ENCODE measurements at regions of chr9 and their contacts with region 1.

Region 1: GRCh38 chr9:6412487-6413364 is at the start of gene UHRF2:
- DNase-seq: peak; percentile 100
- ATAC-seq: peak; percentile 92
- H3K4me3 Mint-ChIP-seq: peak within 1 kb of the TSS; percentile 83
- H3K27ac Mint-ChIP-seq: peak within 1 kb of the TSS; percentile 95
- H3K4me1 Mint-ChIP-seq: peaks cover 27% of the 10 kb centered on the region
- H3K27me3 Mint-ChIP-seq: peaks cover 2% of the 10 kb centered on the region
- CTCF ChIP-seq: no peak
- total RNA-seq, gene UHRF2: 57.0 to 60.1 TPM

Region 2: DNA sequence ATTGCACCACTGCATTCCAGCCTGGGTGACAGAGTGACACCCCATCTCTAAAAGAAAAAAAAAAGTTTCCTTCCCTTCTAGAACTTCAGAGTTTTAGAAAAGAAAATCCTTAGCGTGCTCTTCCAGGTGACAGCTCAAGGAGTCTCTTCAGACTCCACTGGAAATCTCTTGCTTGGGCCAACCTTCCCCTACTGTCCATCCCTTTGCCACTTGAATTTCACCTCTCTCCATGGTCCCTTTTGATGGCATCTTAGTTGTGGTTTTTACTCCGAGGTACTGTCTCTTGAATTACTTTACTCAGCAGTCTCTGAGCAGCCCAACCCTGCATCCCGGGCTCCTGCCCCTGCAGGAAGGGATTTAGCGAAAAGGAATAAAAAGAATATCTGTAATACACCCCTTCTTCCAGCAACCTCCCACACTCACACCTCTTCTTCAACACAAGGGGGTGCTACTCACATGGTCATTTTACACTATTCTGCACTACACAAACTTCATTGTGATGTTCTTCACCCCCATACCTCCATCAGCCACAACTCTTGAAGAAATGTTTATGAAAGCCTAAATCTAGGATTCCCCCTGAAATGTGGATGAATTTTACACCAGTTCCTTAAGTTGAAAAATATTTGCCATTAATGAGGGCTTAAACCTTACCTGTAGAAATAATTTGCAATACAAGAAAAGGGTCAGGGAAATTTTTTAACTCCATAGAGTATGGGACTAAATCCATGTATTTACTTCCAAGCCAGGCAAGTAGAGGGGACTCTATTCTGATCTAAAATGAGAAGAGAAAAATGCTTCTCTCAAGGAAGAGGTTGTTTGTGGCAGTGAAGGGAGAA is 58.7 kb before region 1 on chr9:
- CTCF ChIA-PET with region 1: interaction called, 11 read pairs
- POLR2A ChIA-PET with region 1: interaction called, 6 read pairs
- intact Hi-C with region 1: loop called (anchors 10 kb)
- DNase-seq: peak; percentile 28
- ATAC-seq: peak; percentile 93
- H3K4me3 Mint-ChIP-seq: no peak overlapping the region
- H3K27ac Mint-ChIP-seq: no peak overlapping the region
- H3K4me1 Mint-ChIP-seq: peaks cover 6% of the 10 kb centered on the region
- H3K27me3 Mint-ChIP-seq: peaks cover 13% of the 10 kb centered on the region
- CTCF ChIP-seq: peak; percentile 83

Region 3: GRCh38 chr9:6428940-6429889 is 16.5 kb after region 1 on chr9:
- CTCF ChIA-PET with region 1: interaction called, 12 read pairs
- POLR2A ChIA-PET with region 1: interaction called, 48 read pairs
- intact Hi-C with region 1: no loop called
- DNase-seq: peak; percentile 18
- ATAC-seq: peak; percentile 85
- H3K4me3 Mint-ChIP-seq: no peak overlapping the region
- H3K27ac Mint-ChIP-seq: peak overlapping the region; percentile 32
- H3K4me1 Mint-ChIP-seq: peaks cover 72% of the 10 kb centered on the region
- H3K27me3 Mint-ChIP-seq: no peaks in the 10 kb centered on the region
- CTCF ChIP-seq: no peak

Region 4: GRCh38 chr9:6681147-6681956 is 268.6 kb after region 1 on chr9:
- CTCF ChIA-PET with region 1: no interaction called
- POLR2A ChIA-PET with region 1: interaction called, 10 read pairs
- intact Hi-C with region 1: loop called (anchors 5 kb)
- DNase-seq: peak; percentile 97
- ATAC-seq: peak; percentile 87
- H3K4me3 Mint-ChIP-seq: peak overlapping the region; percentile 96
- H3K27ac Mint-ChIP-seq: peak overlapping the region; percentile 100
- H3K4me1 Mint-ChIP-seq: peaks cover 17% of the 10 kb centered on the region
- H3K27me3 Mint-ChIP-seq: no peaks in the 10 kb centered on the region
- CTCF ChIP-seq: no peak

Region 5: DNA sequence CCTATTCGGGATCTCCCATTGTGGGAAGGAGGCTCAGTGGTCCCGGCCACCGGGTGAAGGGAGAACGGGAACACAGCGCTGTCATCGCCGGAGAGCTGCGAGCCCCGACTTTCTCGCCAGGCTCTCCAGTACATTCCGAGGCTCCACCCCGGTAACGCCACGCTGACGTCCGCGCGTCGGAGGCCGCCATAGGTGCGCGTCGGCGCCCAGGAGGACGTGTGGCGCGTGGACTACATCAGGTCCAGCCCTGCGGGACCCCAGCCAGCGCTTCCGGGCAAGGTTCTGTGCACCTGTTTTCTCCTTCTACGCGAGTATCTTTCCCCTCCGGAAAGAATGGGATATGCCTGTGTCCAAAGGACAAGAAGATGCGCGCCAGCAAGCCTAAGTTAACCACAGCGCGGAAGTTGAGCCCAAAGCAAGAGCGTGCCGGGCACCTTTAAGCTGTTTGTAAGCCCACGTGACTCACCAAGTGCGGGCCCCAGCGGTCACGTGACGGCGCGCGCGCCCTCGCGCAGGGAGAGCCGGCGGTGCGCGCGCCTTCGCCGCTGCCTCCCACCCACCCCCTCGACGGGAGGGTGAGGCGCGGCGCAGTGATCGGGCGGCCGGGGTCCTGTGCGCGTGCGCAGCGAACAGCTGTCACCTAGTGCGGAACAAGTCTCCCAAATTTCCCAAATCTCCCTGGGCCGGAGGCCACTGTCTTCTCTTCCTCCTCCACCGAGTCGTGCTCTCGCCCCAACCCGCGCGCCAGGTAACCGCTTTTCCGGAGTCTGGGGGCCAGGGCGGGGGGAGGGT is 344.9 kb after region 1 on chr9 and contains the start of gene KDM4C:
- CTCF ChIA-PET with region 1: no interaction called
- POLR2A ChIA-PET with region 1: interaction called, 11 read pairs
- intact Hi-C with region 1: no loop called
- DNase-seq: peak; percentile 96
- ATAC-seq: peak; percentile 86
- H3K4me3 Mint-ChIP-seq: peak within 1 kb of the TSS; percentile 96
- H3K27ac Mint-ChIP-seq: peak within 1 kb of the TSS; percentile 99
- H3K4me1 Mint-ChIP-seq: peaks cover 25% of the 10 kb centered on the region
- H3K27me3 Mint-ChIP-seq: no peaks in the 10 kb centered on the region
- CTCF ChIP-seq: no peak
- total RNA-seq, gene KDM4C: 31.1 to 32.9 TPM

Measured in activated CD8-positive, alpha-beta T cell treated with anti-CD3 and anti-CD28 coated beads for 36 hours (primary cell).